Transverse colon (tissue), 4 donors: ENCODE measurements at regions of chr2 and their contacts with region 1.

Region 1: DNA sequence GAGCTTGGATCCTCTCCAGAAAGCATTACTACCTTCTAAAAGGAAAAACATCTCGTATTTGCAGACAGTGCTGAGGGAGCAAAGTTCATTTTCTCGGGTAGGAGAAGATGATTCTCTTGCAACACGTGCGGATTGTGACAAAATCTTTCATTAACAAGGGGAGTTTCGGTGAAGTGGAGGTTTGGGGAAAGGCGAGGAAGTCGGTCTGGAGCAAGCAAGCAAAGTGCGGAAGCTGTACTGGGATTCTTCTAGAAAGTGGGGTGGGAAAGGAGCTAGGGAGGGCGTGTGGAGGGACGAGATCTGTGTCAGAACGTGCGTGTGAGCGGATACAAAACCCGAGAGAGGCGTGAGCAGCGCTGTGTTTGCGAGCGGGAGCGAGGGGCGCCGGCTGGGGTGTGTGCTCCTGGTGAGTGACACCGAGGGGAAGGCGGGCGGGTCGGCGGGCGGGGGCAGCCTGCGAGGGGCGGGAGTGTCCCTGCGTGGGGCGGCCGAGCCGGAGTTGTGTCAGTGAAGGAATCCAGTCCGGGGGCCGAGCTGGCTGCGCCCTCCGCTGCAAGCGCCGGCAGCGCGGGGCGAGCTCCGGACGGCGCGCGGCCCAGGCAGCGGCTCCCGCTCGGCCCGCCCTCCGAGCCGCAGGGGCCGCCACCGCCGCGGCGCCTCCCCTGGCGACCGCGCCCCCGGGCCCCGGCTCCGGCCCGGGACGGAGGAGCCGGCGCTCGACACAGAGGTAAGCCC is at the start of gene SPATS2L:
- DNase-seq: peak; percentile 81
- H3K4me3 ChIP-seq: peak within 1 kb of the TSS; percentile 70 to 96 (median 90)
- H3K27ac ChIP-seq: peak within 1 kb of the TSS; percentile 93 to 97 (median 96)
- H3K4me1 ChIP-seq: peaks cover 0 to 33% (median 13%) of the 10 kb centered on the region in 4 donors
- H3K27me3 ChIP-seq: no peaks in the 10 kb centered on the region
- CTCF ChIP-seq: no peak
- EP300 ChIP-seq: no peak
- POLR2A ChIP-seq: peak; percentile 62
- total RNA-seq, gene SPATS2L: 33.4 to 236 (median 159) TPM

Region 2: DNA sequence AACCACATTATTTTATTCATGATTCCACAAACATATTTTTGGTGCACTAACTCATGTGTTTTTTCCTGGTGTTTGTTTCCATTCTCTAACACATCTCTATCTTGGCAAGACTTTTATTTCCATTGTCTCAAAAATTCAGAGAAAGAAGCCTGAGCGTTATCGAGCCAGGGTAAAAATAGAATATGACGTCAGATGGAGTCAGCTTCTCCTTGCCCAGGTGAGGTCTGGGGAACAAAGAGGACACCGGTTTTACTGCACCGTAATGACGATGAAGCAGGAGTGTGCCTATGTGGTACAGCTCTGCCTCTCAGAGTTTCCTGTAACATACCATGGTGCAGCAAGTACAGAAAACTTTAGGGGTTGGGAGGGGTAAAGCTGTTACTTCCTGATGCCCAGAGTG is 1840.4 kb before region 1 on chr2:
- in situ Hi-C with region 1: no loop called
- intact Hi-C with region 1: no loop called
- DNase-seq: no peak
- H3K4me3 ChIP-seq: no peak overlapping the region
- H3K27ac ChIP-seq: no peak overlapping the region
- H3K4me1 ChIP-seq: no peaks in the 10 kb centered on the region
- H3K27me3 ChIP-seq: no peaks in the 10 kb centered on the region
- CTCF ChIP-seq: no peak
- EP300 ChIP-seq: no peak
- POLR2A ChIP-seq: no peak

Region 3: GRCh38 chr2:199985625-199986207 is 320.6 kb before region 1 on chr2:
- in situ Hi-C with region 1: loop called in 1 of 4 experiments (anchors 25 kb)
- intact Hi-C with region 1: no loop called
- DNase-seq: peak; percentile 78
- H3K4me3 ChIP-seq: no peak overlapping the region
- H3K27ac ChIP-seq: no peak overlapping the region
- H3K4me1 ChIP-seq: peaks cover 0 to 5% (median 2%) of the 10 kb centered on the region in 4 donors
- H3K27me3 ChIP-seq: no peaks in the 10 kb centered on the region
- CTCF ChIP-seq: peak; percentile 56 to 73 (median 67)
- EP300 ChIP-seq: no peak
- POLR2A ChIP-seq: no peak

Region 4: DNA sequence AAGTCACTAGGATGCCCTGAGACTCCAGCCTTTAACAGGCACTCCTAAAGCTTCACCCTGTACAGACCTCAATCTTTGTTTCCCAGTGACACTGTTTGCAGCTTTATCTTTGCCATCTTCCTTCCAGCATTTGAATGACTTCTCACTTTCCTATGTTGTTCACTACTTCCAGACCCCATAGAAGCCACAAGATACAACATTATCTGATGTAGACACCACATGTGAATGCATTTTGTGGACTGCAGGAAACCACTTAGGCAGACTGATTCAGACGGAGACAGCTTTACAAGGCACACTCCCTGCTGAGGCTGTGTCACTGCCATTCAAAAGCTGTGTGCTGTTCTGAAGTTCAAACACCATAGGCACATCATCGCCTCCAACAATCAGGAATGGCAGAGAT is 67.1 kb before region 1 on chr2:
- in situ Hi-C with region 1: no loop called
- intact Hi-C with region 1: no loop called
- DNase-seq: no peak
- H3K4me3 ChIP-seq: no peak overlapping the region
- H3K27ac ChIP-seq: no peak overlapping the region
- H3K4me1 ChIP-seq: no peaks in the 10 kb centered on the region
- H3K27me3 ChIP-seq: no peaks in the 10 kb centered on the region
- CTCF ChIP-seq: no peak
- EP300 ChIP-seq: no peak
- POLR2A ChIP-seq: no peak

Region 5: DNA sequence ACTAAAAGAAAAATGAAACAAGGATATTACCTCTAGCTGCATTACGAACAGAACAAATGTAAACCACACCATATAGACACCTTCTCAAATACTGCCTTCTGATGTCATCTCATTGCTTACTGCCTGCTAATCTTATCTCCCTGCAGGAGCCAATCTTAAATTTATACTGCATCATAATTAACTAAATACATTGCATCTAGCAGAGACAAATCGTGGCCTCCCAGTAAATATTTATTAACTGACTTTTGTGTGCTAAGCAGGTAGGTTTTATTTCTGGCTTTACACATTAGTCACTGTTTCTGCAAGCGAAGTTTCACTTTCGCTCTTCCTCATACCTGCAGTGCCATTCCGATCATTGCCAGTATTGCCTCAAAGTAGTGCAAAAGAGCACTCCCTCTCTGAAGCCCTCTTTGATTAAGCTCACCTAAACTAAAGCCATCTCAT is 67.6 kb after region 1 on chr2:
- in situ Hi-C with region 1: no loop called
- intact Hi-C with region 1: loop called (anchors 10 kb)
- DNase-seq: peak; percentile 21
- H3K4me3 ChIP-seq: peak overlapping the region in 1 of 4 donors; percentile 27
- H3K27ac ChIP-seq: peak overlapping the region; percentile 58 to 91 (median 88)
- H3K4me1 ChIP-seq: peaks cover 30 to 61% (median 51%) of the 10 kb centered on the region in 4 donors
- H3K27me3 ChIP-seq: no peaks in the 10 kb centered on the region
- CTCF ChIP-seq: peak in 1 of 5 experiments; percentile 4
- EP300 ChIP-seq: no peak
- POLR2A ChIP-seq: no peak

Region 6: GRCh38 chr2:200405599-200406298 is 99.4 kb after region 1 on chr2:
- in situ Hi-C with region 1: loop called in 1 of 4 experiments (anchors 25 kb)
- intact Hi-C with region 1: no loop called
- DNase-seq: peak; percentile 21
- H3K4me3 ChIP-seq: no peak overlapping the region
- H3K27ac ChIP-seq: peak overlapping the region; percentile 79 to 87 (median 84)
- H3K4me1 ChIP-seq: peaks cover 26 to 50% (median 46%) of the 10 kb centered on the region in 4 donors
- H3K27me3 ChIP-seq: no peaks in the 10 kb centered on the region
- CTCF ChIP-seq: no peak
- EP300 ChIP-seq: peak; percentile 44
- POLR2A ChIP-seq: no peak

Region 7: DNA sequence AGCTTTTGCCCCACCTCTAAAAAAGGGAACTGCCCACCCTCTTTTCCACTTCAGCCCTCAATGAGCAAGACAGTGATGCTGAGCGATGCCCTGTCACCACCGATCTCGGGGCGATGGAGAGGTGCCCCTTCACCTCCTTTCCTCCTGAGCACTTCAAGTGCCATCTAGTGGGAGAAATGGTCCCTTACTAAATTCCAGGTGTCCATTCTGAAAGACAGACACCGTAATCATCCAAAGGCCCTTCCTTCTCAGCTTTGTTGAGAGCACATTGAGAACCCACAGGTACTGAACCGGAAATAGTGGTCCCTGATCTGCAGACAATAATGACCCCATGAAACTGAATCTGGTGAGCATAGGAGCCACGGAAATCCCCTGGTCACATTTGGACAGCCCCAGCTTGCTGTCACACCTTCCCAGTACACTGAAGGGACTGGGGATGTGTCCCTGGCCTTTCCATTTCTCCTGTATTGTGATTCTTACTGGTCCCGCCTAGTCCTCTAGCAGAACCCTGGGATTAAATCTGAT is 165.0 kb after region 1 on chr2:
- in situ Hi-C with region 1: loop called in 2 of 4 experiments (anchors 10 kb)
- intact Hi-C with region 1: loop called (anchors 10 kb)
- DNase-seq: peak; percentile 28
- H3K4me3 ChIP-seq: no peak overlapping the region
- H3K27ac ChIP-seq: no peak overlapping the region
- H3K4me1 ChIP-seq: peaks cover 0 to 13% (median 0%) of the 10 kb centered on the region in 4 donors
- H3K27me3 ChIP-seq: no peaks in the 10 kb centered on the region
- CTCF ChIP-seq: peak; percentile 33 to 52 (median 42)
- EP300 ChIP-seq: no peak
- POLR2A ChIP-seq: no peak

Region 8: DNA sequence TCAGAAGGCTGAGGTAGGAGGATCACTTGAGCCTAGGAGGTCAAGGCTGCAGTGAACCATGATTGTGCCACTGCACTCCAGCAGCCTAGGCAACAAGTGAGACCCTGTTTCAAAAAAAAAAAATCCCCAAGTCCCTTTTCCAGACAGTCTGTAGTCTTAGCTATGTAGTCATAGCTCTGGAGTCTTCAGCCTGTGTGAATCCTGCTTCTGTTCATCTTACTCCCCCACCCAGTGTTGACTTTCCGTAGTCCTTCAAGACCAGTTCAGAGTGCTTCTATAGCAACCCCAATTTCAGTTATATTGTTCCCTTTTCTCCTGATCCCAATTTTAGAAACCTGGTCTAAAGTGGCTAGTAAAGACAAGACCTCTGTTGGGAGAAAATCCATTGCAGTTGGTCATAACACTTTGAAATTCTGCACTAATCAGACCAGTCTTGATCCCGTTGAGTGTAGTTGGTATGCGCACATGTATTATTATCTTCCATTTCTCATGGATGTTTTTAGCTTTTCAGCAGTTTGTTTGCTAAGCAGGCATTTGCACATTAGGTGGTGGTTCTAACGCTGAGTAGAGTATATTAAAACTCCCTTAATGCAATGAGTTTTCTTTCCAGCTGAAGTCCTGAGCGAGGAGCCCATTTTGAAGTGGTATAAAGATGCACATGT is 514.3 kb after region 1 on chr2:
- in situ Hi-C with region 1: no loop called
- intact Hi-C with region 1: no loop called
- DNase-seq: no peak
- H3K4me3 ChIP-seq: no peak overlapping the region
- H3K27ac ChIP-seq: no peak overlapping the region
- H3K4me1 ChIP-seq: no peaks in the 10 kb centered on the region
- H3K27me3 ChIP-seq: no peaks in the 10 kb centered on the region
- CTCF ChIP-seq: no peak
- EP300 ChIP-seq: no peak
- POLR2A ChIP-seq: no peak

Region 9: GRCh38 chr2:200864176-200864976 is 558.0 kb after region 1 on chr2 and contains the start of gene CLK1:
- in situ Hi-C with region 1: loop called in 1 of 4 experiments (anchors 25 kb)
- intact Hi-C with region 1: no loop called
- DNase-seq: peak; percentile 98
- H3K4me3 ChIP-seq: peak within 1 kb of the TSS; percentile 73 to 92 (median 80)
- H3K27ac ChIP-seq: peak within 1 kb of the TSS; percentile 98 to 100 (median 99)
- H3K4me1 ChIP-seq: peaks cover 9 to 42% (median 25%) of the 10 kb centered on the region in 4 donors
- H3K27me3 ChIP-seq: no peaks in the 10 kb centered on the region
- CTCF ChIP-seq: peak in 1 of 5 experiments; percentile 11
- EP300 ChIP-seq: no peak
- POLR2A ChIP-seq: peak; percentile 100
- total RNA-seq, gene CLK1: 115 to 231 (median 127) TPM